A549 (cell line): ENCODE measurements at regions of chr20 and their contacts with region 1.

Region 1: DNA sequence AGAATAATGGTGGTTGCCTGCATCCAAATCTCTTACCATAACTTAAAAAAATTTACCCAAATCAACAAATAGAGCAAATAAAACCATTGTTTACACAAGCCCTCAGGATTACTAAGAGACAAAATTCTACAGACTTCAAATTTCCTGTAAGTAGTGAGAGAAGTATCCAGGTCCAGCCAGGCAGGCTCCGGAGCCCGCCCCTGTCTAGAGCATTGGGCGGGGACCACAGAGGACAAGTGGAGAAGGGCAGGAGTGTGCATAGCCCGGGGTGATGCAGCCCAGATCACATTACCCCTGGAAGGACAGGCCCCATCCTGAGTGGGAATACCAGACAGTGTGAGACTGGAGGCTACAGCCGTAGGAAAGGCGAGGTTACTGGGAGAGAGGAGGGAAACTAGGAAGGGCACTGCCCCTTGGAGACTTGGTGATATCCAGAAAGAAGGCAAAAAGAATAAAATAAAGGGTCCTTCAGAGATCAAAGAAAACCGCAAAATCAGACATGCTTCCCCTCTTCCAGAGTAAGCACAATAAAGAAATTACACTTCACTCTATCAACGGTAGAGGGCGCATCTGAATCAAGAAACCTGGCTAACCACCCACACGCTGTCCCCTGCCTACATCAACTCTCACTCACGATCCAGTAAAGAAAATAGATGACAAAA is 26.6 kb downstream of the RIN2 start:
- DNase-seq: peak; percentile 68 to 92
- ATAC-seq: peak; percentile 94 to 95
- H3K4me3 ChIP-seq: no peak overlapping the region
- H3K27ac ChIP-seq: peak overlapping the region; percentile 87 to 89
- H3K4me1 ChIP-seq: peaks cover 35% of the 10 kb centered on the region
- CTCF ChIP-seq: peak; percentile 97
- EP300 ChIP-seq: no peak; a peak in 1 of 5 replicates
- POLR2A ChIP-seq: peak; percentile 21; the same call in 1 of the 2 replicates
- RAD21 ChIP-seq: peak; percentile 97 to 99

Region 2: GRCh38 chr20:19460386-19460785 is 324.3 kb before region 1 on chr20:
- CTCF ChIA-PET with region 1: no interaction called
- POLR2A ChIA-PET with region 1: no interaction called
- DNase-seq: no peak
- ATAC-seq: no peak
- H3K4me3 ChIP-seq: no peak overlapping the region
- H3K27ac ChIP-seq: no peak overlapping the region
- H3K4me1 ChIP-seq: no peaks in the 10 kb centered on the region
- CTCF ChIP-seq: no peak
- EP300 ChIP-seq: no peak
- POLR2A ChIP-seq: no peak
- RAD21 ChIP-seq: no peak

Region 3: DNA sequence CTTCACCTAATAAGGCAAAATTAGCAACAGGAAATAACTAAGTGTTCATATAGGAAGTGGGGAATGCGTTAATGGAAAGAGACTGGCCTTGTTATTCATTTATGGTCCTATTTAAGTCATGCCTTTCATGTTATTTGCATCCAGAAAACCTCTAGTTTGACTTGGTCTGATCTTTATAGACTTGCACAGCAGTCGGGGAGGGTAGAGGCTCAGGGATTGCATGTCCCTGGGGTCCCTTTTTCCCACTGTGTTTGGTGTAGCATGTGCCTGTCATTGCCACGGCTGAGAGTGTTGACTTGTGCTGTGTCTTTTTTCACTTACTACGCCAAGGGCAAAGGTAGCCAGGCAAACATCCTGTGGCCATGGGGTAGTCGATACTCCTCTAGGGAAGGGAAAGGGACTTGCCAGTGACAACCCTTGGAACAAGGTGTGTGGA is 132.0 kb before region 1 on chr20:
- CTCF ChIA-PET with region 1: no interaction called
- POLR2A ChIA-PET with region 1: no interaction called
- DNase-seq: no peak
- ATAC-seq: no peak
- H3K4me3 ChIP-seq: no peak overlapping the region
- H3K27ac ChIP-seq: no peak overlapping the region
- H3K4me1 ChIP-seq: no peaks in the 10 kb centered on the region
- CTCF ChIP-seq: no peak
- EP300 ChIP-seq: no peak
- POLR2A ChIP-seq: no peak
- RAD21 ChIP-seq: no peak

Region 4: GRCh38 chr20:19802492-19803158 is 18.0 kb after region 1 on chr20:
- CTCF ChIA-PET with region 1: interaction called, 29 read pairs
- POLR2A ChIA-PET with region 1: no interaction called
- DNase-seq: peak; percentile 47 to 76
- ATAC-seq: peak; percentile 96 to 98
- H3K4me3 ChIP-seq: no peak overlapping the region
- H3K27ac ChIP-seq: peak overlapping the region; percentile 2 to 67; a peak in 5 of 6 replicates
- H3K4me1 ChIP-seq: peaks cover 28% of the 10 kb centered on the region
- CTCF ChIP-seq: peak; percentile 44
- EP300 ChIP-seq: no peak
- POLR2A ChIP-seq: no peak
- RAD21 ChIP-seq: peak; percentile 45 to 52

Region 5: GRCh38 chr20:19835533-19836222 is 51.0 kb after region 1 on chr20:
- CTCF ChIA-PET with region 1: interaction called, 14 read pairs
- POLR2A ChIA-PET with region 1: no interaction called
- DNase-seq: no peak
- ATAC-seq: peak in 1 of 2 experiments; percentile 63; a peak in 4 of 6 replicates
- H3K4me3 ChIP-seq: no peak overlapping the region
- H3K27ac ChIP-seq: peak overlapping the region in 1 of 2 experiments; percentile 10; a peak in 3 of 6 replicates
- H3K4me1 ChIP-seq: peaks cover 7% of the 10 kb centered on the region; the same call in 2 of the 3 replicates
- CTCF ChIP-seq: no peak
- EP300 ChIP-seq: no peak
- POLR2A ChIP-seq: no peak
- RAD21 ChIP-seq: no peak

Region 6: GRCh38 chr20:19974626-19975435 is 190.2 kb after region 1 on chr20:
- CTCF ChIA-PET with region 1: interaction called, 44 read pairs
- POLR2A ChIA-PET with region 1: interaction called, 21 read pairs
- DNase-seq: peak; percentile 77 to 89
- ATAC-seq: peak; percentile 83 to 87
- H3K4me3 ChIP-seq: peak overlapping the region; percentile 65
- H3K27ac ChIP-seq: peak overlapping the region; percentile 94 to 95
- H3K4me1 ChIP-seq: peaks cover 40% of the 10 kb centered on the region
- CTCF ChIP-seq: no peak
- EP300 ChIP-seq: no peak
- POLR2A ChIP-seq: peak; percentile 72
- RAD21 ChIP-seq: peak in 1 of 2 experiments; percentile 31; a peak in 3 of 5 replicates

Region 7: GRCh38 chr20:20003031-20003954 is 218.7 kb after region 1 on chr20:
- CTCF ChIA-PET with region 1: interaction called, 80 read pairs
- POLR2A ChIA-PET with region 1: no interaction called
- DNase-seq: no peak
- ATAC-seq: no peak
- H3K4me3 ChIP-seq: no peak overlapping the region
- H3K27ac ChIP-seq: no peak overlapping the region
- H3K4me1 ChIP-seq: no peaks in the 10 kb centered on the region
- CTCF ChIP-seq: no peak
- EP300 ChIP-seq: no peak
- POLR2A ChIP-seq: no peak
- RAD21 ChIP-seq: no peak